AG04450 (cell line): ENCODE measurements at regions of chr20 and their contacts with region 1.

Region 1: GRCh38 chr20:35741892-35742740 is at the start of gene RBM39:
- DNase-seq: peak; percentile 100
- H3K4me3 ChIP-seq: peak within 1 kb of the TSS; percentile 89
- H3K27ac ChIP-seq: peak within 1 kb of the TSS; percentile 99
- H3K27me3 ChIP-seq: no peaks in the 10 kb centered on the region
- CTCF ChIP-seq: peak; percentile 52
- polyA plus RNA-seq, gene RBM39: 144 and 162 TPM in 2 replicates

Region 2: GRCh38 chr20:35601008-35601973 is 140.8 kb before region 1 on chr20:
- CTCF ChIA-PET with region 1: no interaction called
- POLR2A ChIA-PET with region 1: no interaction called
- DNase-seq: peak; percentile 18
- H3K4me3 ChIP-seq: peak overlapping the region; percentile 53
- H3K27ac ChIP-seq: no peak overlapping the region
- H3K27me3 ChIP-seq: peaks cover 36% of the 10 kb centered on the region
- CTCF ChIP-seq: peak; percentile 35

Region 3: DNA sequence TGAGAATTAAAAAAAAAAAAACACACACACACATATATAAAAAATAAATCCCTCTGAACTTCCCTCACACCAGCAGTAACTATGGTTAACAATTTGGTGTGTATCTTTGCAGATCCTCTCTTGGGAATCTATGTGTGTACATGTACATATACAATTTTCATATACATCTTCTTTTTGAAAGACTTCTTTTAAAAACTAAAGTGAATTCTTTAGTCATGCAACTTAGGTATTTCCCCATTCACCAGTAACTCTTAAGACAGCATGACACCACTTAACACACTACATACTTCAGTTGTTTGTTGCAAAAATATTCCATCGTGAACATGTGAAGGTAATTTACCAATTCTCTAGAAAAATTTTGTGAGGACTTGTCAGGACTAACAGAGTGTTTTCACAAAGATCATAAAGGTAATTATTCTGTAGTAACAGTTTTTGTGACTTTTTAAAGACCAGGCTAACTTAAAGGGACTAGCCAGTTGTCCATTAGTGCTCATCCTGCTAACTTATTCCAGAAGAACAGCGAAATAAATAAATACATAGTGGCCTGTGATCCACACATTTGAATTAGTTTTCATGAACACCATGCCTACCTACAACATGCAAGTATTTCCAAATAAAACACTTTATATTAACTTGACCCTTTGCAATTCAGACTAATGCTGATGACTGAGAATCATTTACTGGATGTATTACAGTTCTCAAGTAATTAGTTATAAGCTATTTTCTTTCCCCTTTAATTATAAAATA is 12.1 kb before region 1 on chr20:
- CTCF ChIA-PET with region 1: interaction called, 5 read pairs
- POLR2A ChIA-PET with region 1: interaction called, 22 read pairs
- DNase-seq: no peak
- H3K4me3 ChIP-seq: no peak overlapping the region
- H3K27ac ChIP-seq: no peak overlapping the region
- H3K27me3 ChIP-seq: no peaks in the 10 kb centered on the region
- CTCF ChIP-seq: no peak

Region 4: DNA sequence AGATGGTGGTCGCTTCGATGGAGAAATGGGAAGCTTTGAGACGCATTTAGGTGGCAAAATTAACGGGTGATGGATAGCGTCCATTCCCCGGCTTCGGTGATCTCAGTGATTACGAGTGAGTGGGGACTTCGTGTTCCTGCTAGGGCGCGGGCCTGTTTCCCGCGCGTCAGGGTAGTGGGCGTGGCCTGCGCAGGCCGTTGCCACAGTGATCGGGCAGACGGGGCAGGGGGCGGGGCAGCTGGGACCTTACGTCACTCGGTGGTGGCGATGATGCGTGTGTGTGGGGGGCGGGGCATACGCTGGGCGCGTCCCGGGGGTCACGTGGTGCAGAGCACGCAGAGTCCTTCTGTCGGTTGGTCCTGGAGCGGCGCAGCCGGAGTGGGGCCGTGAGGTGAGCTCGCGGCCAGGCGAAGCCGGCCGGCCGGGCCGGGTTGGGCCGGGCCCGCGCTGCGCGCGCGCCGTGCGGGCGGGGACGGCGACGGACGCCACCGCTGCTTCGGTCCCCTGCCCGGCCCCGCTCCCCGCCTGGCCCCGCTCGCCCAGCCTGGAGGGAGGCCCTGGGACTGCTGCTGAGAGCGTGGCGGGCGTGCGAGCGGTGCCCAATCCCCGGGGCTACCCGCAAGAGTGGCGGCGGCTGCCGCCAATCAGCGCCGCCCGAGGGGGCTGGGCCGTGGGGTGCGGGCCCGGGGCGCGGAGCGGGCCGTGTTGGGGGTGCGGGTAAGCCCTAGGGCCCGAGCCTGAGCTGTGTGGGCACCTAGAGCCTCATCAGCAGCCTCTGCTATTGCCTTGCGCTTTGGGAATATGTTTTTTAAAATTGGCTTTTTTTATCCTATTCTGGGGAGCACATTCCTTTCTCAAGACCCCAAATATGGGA is 29.8 kb after region 1 on chr20 and contains the start of gene PHF20:
- CTCF ChIA-PET with region 1: interaction called, 4 read pairs
- POLR2A ChIA-PET with region 1: interaction called, 71 read pairs
- DNase-seq: peak; percentile 96
- H3K4me3 ChIP-seq: peak within 1 kb of the TSS; percentile 87
- H3K27ac ChIP-seq: peak within 1 kb of the TSS; percentile 50
- H3K27me3 ChIP-seq: no peaks in the 10 kb centered on the region
- CTCF ChIP-seq: no peak
- polyA plus RNA-seq, gene PHF20: 25.8 and 30.6 TPM in 2 replicates

Region 5: DNA sequence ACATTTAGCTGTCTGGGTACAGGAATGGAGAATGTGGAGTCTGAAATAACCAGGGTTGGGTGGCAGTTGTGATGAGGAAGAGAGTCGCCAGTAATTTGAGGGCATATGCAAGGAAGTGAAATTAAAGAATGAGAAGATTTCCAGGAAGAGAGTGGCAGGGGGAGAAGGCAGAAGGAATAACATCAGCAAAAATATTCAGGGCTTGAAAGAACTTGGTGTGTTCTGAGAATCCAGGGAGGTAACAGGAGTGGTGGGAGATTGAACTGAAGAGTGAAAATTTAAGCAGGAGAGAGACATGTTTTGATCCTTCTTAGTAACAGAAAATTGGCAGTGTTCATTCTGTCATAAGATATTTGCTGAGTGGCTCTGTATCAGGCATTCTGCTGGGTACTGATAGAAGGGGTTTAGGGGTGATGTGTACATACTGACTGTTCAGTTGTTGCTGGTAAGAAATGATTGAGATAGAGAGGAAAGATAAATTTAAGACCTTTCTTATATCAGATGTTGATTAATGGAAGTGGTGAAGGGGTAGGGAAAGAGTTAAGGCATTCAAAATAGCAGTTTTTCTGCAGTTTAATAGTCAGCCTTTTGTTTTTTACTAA is 84.4 kb after region 1 on chr20:
- CTCF ChIA-PET with region 1: no interaction called
- POLR2A ChIA-PET with region 1: no interaction called
- DNase-seq: no peak
- H3K4me3 ChIP-seq: no peak overlapping the region
- H3K27ac ChIP-seq: no peak overlapping the region
- H3K27me3 ChIP-seq: no peaks in the 10 kb centered on the region
- CTCF ChIP-seq: no peak

Region 6: GRCh38 chr20:35845561-35845960 is 103.4 kb after region 1 on chr20:
- CTCF ChIA-PET with region 1: no interaction called
- POLR2A ChIA-PET with region 1: interaction called, 11 read pairs
- DNase-seq: no peak
- H3K4me3 ChIP-seq: no peak overlapping the region
- H3K27ac ChIP-seq: no peak overlapping the region
- H3K27me3 ChIP-seq: no peaks in the 10 kb centered on the region
- CTCF ChIP-seq: no peak

Region 7: DNA sequence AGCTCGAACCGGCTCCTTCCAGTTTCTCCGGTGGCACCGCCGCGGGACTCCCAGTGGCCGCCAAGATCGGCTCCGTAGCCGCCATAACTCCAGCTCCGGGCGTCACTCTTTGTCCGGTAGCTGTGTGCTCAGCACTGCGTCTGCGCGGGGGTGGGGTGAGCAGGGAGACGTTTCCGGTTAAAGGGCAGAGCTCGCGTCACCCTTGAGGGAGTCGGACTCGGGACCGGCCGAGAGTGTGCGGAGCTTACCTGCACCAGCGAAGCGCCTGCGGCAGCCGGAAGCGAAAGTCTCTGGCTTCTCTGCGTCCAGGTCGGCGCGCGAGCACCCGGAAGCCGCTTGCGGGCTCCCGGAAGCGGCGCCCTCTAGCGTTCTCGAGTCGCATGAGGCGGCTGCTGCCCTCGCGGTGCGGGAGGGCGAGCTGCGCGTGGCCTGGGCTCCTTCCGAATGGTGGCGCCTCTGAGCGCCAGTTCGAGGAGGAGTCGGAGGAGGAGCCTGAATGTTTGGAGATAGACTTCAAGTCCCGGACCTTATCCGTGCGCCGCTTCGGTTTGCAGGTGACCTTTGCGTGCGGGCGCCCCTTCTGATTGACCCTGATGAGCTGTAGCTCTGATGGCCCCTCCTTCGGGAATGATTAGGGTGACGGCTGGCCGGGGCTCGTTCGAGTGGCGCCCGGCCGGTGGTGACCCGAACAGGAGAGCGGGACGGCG is 212.2 kb after region 1 on chr20 and contains the start of gene SCAND1:
- CTCF ChIA-PET with region 1: interaction called, 8 read pairs
- POLR2A ChIA-PET with region 1: interaction called, 25 read pairs
- DNase-seq: peak; percentile 94
- H3K4me3 ChIP-seq: peak within 1 kb of the TSS; percentile 91
- H3K27ac ChIP-seq: peak within 1 kb of the TSS; percentile 99
- H3K27me3 ChIP-seq: no peaks in the 10 kb centered on the region
- CTCF ChIP-seq: peak; percentile 96
- polyA plus RNA-seq, gene SCAND1: 7.4 and 11.1 TPM in 2 replicates